H1 (cell line): ENCODE measurements at regions of chr17 and their contacts with region 1.

Region 1: GRCh38 chr17:45073414-45074070 is 12.4 kb downstream of the NMT1 start:
- DNase-seq: no peak
- H3K4me3 ChIP-seq: no peak overlapping the region
- H3K27ac ChIP-seq: no peak overlapping the region
- H3K4me1 ChIP-seq: no peaks in the 10 kb centered on the region
- H3K27me3 ChIP-seq: no peaks in the 10 kb centered on the region
- CTCF ChIP-seq: no peak
- EP300 ChIP-seq: no peak
- POLR2A ChIP-seq: no peak
- RAD21 ChIP-seq: no peak

Region 2: DNA sequence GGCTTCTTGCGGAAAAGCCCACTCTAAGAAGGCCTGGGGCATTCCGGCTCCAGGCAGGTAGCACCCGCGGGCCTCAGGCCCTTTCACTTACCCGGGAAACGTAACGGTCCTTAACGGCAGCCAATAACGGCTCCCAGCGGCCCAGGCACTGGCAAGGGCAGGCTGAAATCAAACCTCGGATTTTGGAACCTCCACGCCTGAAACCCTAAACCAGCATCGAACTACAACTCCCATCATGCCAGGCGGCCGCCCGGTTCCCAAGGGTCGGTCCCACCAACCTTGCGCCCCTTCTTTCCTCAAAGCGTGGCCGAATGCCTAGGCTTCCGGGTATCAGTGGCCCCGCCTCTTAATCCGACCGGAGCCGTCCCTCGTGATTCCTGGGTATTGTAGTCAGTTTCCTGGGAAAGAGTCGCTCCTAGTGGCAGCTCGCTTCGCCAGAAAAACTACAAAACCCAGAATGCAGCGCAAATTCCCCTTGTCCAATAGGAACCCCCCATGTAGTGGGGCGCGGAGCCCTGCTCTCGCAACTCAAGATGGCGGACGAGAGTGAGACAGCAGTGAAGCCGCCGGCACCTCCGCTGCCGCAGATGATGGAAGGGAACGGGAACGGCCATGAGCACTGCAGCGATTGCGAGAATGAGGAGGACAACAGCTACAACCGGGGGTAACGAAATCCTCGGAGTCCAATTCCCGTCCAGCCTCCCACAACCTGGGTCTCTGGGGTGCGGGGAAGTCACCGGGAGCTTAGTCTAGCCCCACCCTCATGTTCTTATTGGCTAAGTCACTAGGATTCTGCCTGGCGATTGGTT is 12.5 kb before region 1 on chr17 and contains the start of gene NMT1:
- CTCF ChIA-PET with region 1: interaction called, 4 read pairs
- POLR2A ChIA-PET with region 1: interaction called, 13 read pairs
- DNase-seq: peak; percentile 94 to 96
- H3K4me3 ChIP-seq: peak within 1 kb of the TSS; percentile 80 to 100 (median 96)
- H3K27ac ChIP-seq: peak within 1 kb of the TSS; percentile 98
- H3K4me1 ChIP-seq: no peaks in the 10 kb centered on the region; a peak in 2 of 7 replicates
- H3K27me3 ChIP-seq: no peaks in the 10 kb centered on the region
- CTCF ChIP-seq: peak in 1 of 3 experiments; percentile 2; a peak in 1 of 4 replicates
- EP300 ChIP-seq: no peak
- POLR2A ChIP-seq: peak; percentile 90 to 97
- RAD21 ChIP-seq: no peak
- total RNA-seq, gene NMT1: 149 and 152 TPM in 2 replicates

Region 3: DNA sequence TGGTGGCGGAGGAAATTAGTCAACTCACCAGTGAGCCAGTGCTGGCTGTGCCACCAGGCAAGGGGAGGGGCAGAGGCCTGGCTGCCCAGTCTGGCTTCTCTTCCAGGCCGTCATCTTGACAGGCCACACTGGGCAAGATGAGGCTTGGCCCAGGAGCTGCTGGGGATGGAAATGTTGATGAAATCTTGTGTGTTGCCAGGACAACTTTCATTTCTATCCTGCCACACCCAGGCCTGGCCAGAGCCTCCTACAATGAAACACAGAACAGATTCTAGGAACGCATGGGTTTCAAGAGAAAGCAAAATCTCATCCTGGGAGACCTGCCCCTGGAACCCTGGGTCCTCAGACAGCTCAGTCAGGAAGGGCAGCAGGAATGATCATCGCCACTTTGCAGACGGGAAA is 97.4 kb after region 1 on chr17:
- CTCF ChIA-PET with region 1: no interaction called
- POLR2A ChIA-PET with region 1: no interaction called
- DNase-seq: no peak
- H3K4me3 ChIP-seq: no peak overlapping the region
- H3K27ac ChIP-seq: peak overlapping the region; percentile 64
- H3K4me1 ChIP-seq: peaks cover 5 to 29% (median 26%) of the 10 kb centered on the region in 4 experiments
- H3K27me3 ChIP-seq: no peaks in the 10 kb centered on the region
- CTCF ChIP-seq: no peak
- EP300 ChIP-seq: no peak
- POLR2A ChIP-seq: no peak
- RAD21 ChIP-seq: no peak

Region 4: GRCh38 chr17:45184144-45184543 is 110.6 kb after region 1 on chr17:
- CTCF ChIA-PET with region 1: no interaction called
- POLR2A ChIA-PET with region 1: no interaction called
- DNase-seq: no peak
- H3K4me3 ChIP-seq: no peak overlapping the region
- H3K27ac ChIP-seq: no peak overlapping the region
- H3K4me1 ChIP-seq: peaks cover 0 to 3% (median 0%) of the 10 kb centered on the region in 4 experiments; a peak in 2 of 7 replicates
- H3K27me3 ChIP-seq: no peaks in the 10 kb centered on the region
- CTCF ChIP-seq: no peak
- EP300 ChIP-seq: no peak
- POLR2A ChIP-seq: no peak
- RAD21 ChIP-seq: no peak